AG04449 (cell line): ENCODE measurements at regions of chr16 and their contacts with region 1.

Region 1: DNA sequence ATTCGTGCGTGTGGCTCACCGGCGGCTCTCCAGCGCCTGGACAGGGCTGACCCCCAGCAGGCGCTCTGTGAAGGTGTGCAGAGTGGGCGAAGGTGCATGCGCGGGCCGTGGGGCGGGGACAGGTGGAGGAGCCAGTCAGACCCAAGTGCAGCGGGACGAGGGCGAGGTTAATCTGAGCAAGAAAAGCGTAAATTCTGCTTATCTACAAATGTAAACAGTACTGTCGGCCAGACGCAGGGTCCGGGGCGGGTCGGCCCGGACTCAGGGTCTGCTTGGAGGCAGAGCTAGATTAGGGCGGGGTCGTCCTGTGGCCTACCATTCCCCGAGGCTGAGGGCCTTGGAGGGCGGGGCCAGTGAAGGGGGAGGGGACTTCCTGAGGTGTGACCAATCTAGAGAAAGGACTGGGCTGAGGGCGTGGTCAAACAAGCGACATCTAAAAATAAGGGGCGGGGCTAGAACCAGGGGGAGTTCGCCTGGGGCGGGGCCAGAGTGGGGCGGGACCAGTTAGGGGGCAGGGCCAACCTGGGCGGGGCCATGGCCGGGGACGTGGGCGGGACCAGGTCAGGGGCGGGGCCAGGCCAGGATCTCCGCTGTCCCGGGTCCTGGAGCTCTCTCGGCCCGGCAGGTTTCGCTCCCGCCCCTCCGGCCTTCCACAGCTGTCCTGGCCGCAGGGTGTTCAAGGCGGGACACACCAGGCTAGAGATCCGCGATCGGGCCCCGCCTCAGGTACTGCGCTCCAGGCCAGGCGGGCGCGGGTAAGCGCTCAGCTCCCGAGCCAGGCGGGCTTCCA is at the start of gene SEC14L5:
- DNase-seq: peak; percentile 84
- H3K4me3 ChIP-seq: peak within 1 kb of the TSS; percentile 59
- CTCF ChIP-seq: no peak

Region 2: DNA sequence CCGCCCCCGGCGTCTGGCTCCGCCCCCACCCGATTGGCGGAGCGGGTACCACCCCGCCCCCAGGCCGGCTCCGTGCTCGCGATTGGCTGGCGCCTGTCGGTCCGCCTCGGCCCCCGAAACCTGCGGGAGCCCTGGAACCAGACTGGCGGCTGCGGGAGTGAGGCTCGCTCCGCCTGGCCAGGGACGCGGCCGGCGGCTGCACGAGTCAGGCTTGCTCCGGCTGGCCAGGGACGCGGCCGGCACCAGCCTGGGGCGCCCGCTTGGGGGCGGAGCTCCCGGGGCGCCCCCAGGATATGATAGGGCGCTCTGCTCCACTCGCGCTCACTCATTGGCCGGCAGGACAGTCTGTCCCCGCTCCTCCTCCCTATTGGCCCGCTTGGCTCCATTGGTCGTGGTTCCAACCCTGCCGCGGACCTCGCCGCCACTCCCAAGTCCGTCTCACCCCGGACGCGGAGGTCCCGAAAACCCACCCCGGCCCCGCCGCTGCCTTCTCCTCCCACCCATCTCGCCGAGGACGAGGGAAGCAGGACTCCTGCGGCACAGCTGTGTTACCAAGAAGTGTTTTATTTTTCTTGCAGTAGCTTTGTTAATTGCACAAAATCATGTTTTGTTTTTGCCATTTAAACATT is 155.1 kb before region 1 on chr16:
- CTCF ChIA-PET with region 1: interaction called, 15 read pairs
- POLR2A ChIA-PET with region 1: no interaction called
- DNase-seq: peak; percentile 37
- H3K4me3 ChIP-seq: peak overlapping the region; percentile 80
- CTCF ChIP-seq: no peak

Region 3: GRCh38 chr16:4846891-4847773 is 110.8 kb before region 1 on chr16 and contains the starts of genes GLYR1 and UBN1:
- CTCF ChIA-PET with region 1: interaction called, 20 read pairs
- POLR2A ChIA-PET with region 1: no interaction called
- DNase-seq: peak; percentile 41
- H3K4me3 ChIP-seq: peak within 1 kb of the TSS; percentile 72
- CTCF ChIP-seq: no peak

Region 4: DNA sequence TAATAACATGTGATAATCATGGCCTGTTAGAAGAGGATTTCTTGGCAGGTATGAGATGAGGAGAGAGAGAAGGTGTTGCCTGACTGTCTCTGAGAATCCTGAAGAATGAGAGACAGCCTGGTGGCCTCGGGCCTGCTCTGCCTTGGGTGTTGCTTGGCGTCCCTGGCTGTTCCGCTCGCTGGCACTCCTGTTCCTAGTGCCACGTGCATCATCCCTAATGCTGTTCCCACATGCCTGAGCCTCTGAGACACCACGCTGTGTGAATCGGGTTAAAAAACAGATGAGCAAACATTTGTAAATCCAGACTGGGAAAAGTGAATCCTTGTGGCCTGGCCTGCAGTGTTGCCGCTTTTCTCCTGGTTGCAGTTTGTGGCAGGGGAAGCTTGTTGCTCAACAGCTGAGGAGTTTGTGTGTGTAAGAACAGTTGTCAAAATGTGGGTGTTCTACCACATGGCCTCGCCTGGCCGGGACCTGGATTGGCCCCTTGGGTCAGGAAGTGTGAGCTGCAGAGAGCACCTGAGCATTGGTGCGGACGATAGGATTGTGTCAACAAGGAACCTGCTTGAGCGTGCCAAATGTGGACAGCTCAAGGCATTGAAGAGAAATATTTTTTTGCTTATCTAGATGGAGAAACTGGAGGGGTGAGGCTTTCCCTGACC is 88.6 kb before region 1 on chr16:
- CTCF ChIA-PET with region 1: interaction called, 13 read pairs
- POLR2A ChIA-PET with region 1: no interaction called
- DNase-seq: no peak
- H3K4me3 ChIP-seq: no peak overlapping the region
- CTCF ChIP-seq: no peak

Region 5: GRCh38 chr16:4944333-4945281 is 13.3 kb before region 1 on chr16:
- CTCF ChIA-PET with region 1: interaction called, 26 read pairs
- POLR2A ChIA-PET with region 1: no interaction called
- DNase-seq: peak; percentile 80
- H3K4me3 ChIP-seq: peak overlapping the region; percentile 15; the same call in 1 of the 2 replicates
- CTCF ChIP-seq: no peak